Activated CD8-positive, alpha-beta T cell treated with anti-CD3 and anti-CD28 coated beads for 36 hours (primary cell): ENCODE measurements at regions of chr9 and their contacts with region 1.

Region 1: GRCh38 chr9:114653556-114654159 is 3.9 kb downstream of the TEX53 start:
- DNase-seq: peak; percentile 90
- ATAC-seq: peak; percentile 97
- H3K4me3 Mint-ChIP-seq: no peak overlapping the region
- H3K27ac Mint-ChIP-seq: no peak overlapping the region
- H3K4me1 Mint-ChIP-seq: peaks cover 25% of the 10 kb centered on the region
- H3K27me3 Mint-ChIP-seq: no peaks in the 10 kb centered on the region
- CTCF ChIP-seq: peak; percentile 91

Region 2: DNA sequence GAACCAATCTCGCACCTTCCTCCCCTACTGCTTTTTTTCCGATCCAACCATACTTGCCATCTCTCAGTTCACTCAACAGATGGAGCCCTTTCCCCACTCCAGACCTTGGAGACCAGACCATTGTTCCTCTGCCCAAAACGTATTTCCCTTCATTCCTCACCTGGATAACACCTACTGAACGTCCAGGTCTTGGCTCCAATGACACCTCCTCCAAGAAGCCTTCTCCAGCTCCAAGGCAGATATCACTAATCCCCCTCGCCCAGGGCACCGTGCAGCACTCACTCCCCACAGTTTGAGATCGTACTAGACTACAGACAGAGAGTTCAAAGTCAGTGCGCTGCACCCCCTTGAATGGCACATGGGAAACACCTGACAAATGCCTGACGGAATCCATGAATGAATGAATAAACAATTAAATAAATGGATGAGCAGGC is 218.8 kb before region 1 on chr9:
- CTCF ChIA-PET with region 1: interaction called, 20 read pairs
- POLR2A ChIA-PET with region 1: no interaction called
- intact Hi-C with region 1: no loop called
- DNase-seq: no peak
- ATAC-seq: peak; percentile 55
- H3K4me3 Mint-ChIP-seq: no peak overlapping the region
- H3K27ac Mint-ChIP-seq: no peak overlapping the region
- H3K4me1 Mint-ChIP-seq: peaks cover 4% of the 10 kb centered on the region
- H3K27me3 Mint-ChIP-seq: no peaks in the 10 kb centered on the region
- CTCF ChIP-seq: no peak

Region 3: DNA sequence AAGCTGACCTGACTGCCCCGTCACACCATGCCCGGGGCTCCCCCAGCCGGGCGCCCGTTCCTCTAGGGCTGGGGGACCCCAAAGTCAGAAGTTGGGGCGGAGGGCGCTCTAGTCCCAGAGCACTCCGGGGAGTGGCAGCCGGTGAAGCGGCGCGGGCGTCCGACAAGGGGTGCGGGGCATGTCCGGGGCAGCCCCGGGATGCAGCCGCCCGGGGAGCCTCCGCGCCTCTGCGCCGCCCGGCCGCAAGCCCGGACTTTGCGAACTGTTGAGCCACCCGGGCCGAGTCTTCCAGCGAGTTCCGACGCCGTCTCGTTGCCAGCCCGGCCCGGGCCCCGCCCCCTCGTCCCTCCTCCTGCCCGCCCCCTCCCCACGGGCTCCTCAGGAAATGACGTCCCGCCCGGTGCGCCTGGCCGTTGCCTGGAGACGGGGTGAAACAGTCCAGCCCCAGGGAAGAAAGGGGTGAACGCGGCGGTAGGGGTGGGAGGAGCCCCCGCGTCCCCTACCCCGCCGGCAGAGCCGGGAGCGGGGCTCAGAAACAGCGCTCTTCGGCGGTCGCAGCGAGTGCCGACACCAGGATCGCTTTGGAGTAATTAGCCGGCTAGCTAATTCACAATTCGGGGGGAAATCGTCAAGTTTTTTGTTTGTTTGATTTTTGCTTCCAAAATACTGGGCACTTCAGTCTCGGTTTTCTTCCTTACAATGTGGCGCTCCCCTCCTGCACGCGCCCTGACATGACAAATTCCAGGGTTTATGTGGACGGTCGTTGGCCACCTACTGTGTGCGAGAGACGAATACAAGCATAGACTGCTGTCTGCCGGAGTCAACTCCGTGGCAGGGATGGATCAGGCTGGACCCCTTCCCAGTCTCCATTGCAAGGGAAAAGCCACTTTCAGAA is 148.2 kb before region 1 on chr9 and contains the start of gene WHRN:
- CTCF ChIA-PET with region 1: interaction called, 30 read pairs
- POLR2A ChIA-PET with region 1: no interaction called
- intact Hi-C with region 1: no loop called
- DNase-seq: peak; percentile 91
- ATAC-seq: peak; percentile 81
- H3K4me3 Mint-ChIP-seq: peak within 1 kb of the TSS; percentile 77
- H3K27ac Mint-ChIP-seq: peak within 1 kb of the TSS; percentile 43
- H3K4me1 Mint-ChIP-seq: peaks cover 28% of the 10 kb centered on the region
- H3K27me3 Mint-ChIP-seq: peaks cover 24% of the 10 kb centered on the region
- CTCF ChIP-seq: no peak
- total RNA-seq, gene WHRN: 12.6 to 14.9 TPM

Region 4: GRCh38 chr9:114587385-114588202 is 66.1 kb before region 1 on chr9 and contains the start of gene ATP6V1G1:
- CTCF ChIA-PET with region 1: interaction called, 43 read pairs
- POLR2A ChIA-PET with region 1: interaction called, 10 read pairs
- intact Hi-C with region 1: loop called (anchors 10 kb)
- DNase-seq: peak; percentile 100
- ATAC-seq: peak; percentile 96
- H3K4me3 Mint-ChIP-seq: peak within 1 kb of the TSS; percentile 94
- H3K27ac Mint-ChIP-seq: peak within 1 kb of the TSS; percentile 99
- H3K4me1 Mint-ChIP-seq: peaks cover 37% of the 10 kb centered on the region
- H3K27me3 Mint-ChIP-seq: no peaks in the 10 kb centered on the region
- CTCF ChIP-seq: no peak
- total RNA-seq, gene ATP6V1G1: 34.1 to 34.7 TPM

Region 5: GRCh38 chr9:114611516-114612271 is 42.0 kb before region 1 on chr9:
- CTCF ChIA-PET with region 1: interaction called, 29 read pairs
- POLR2A ChIA-PET with region 1: no interaction called
- intact Hi-C with region 1: no loop called
- DNase-seq: peak; percentile 44
- ATAC-seq: peak; percentile 65
- H3K4me3 Mint-ChIP-seq: peak overlapping the region; percentile 85
- H3K27ac Mint-ChIP-seq: peak overlapping the region; percentile 89
- H3K4me1 Mint-ChIP-seq: peaks cover 46% of the 10 kb centered on the region
- H3K27me3 Mint-ChIP-seq: no peaks in the 10 kb centered on the region
- CTCF ChIP-seq: no peak

Region 6: DNA sequence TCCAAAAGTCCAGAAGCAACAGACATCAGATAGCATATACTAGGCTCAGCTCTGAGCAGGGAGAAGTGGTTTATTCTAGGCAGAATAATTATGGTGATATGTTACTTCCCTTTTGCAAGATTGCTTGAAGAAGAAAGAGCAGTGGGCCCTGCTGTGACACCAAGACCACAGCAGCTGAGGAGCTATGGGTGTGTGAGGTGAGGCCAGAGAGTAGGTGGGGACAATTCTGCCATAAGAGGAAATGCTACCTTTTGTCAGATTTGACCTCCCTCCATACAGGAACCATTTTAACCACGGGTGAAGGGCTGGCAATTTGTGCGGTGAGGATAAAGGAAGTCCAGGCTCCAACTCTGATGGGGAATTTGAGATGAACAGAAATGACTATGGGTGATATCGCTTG is 100.9 kb after region 1 on chr9:
- CTCF ChIA-PET with region 1: no interaction called
- POLR2A ChIA-PET with region 1: no interaction called
- intact Hi-C with region 1: no loop called
- DNase-seq: peak; percentile 43
- ATAC-seq: peak; percentile 69
- H3K4me3 Mint-ChIP-seq: no peak overlapping the region
- H3K27ac Mint-ChIP-seq: peak overlapping the region; percentile 31
- H3K4me1 Mint-ChIP-seq: peaks cover 18% of the 10 kb centered on the region
- H3K27me3 Mint-ChIP-seq: no peaks in the 10 kb centered on the region
- CTCF ChIP-seq: no peak

Region 7: GRCh38 chr9:114824110-114824509 is 170.5 kb after region 1 on chr9:
- CTCF ChIA-PET with region 1: no interaction called
- POLR2A ChIA-PET with region 1: no interaction called
- intact Hi-C with region 1: no loop called
- DNase-seq: no peak
- ATAC-seq: no peak
- H3K4me3 Mint-ChIP-seq: no peak overlapping the region
- H3K27ac Mint-ChIP-seq: no peak overlapping the region
- H3K4me1 Mint-ChIP-seq: peaks cover 36% of the 10 kb centered on the region
- H3K27me3 Mint-ChIP-seq: no peaks in the 10 kb centered on the region
- CTCF ChIP-seq: no peak

Region 8: GRCh38 chr9:114938687-114939575 is 285.3 kb after region 1 on chr9:
- CTCF ChIA-PET with region 1: no interaction called
- POLR2A ChIA-PET with region 1: no interaction called
- intact Hi-C with region 1: no loop called
- DNase-seq: no peak
- ATAC-seq: peak; percentile 51
- H3K4me3 Mint-ChIP-seq: peak overlapping the region; percentile 4
- H3K27ac Mint-ChIP-seq: peak overlapping the region; percentile 44
- H3K4me1 Mint-ChIP-seq: peaks cover 19% of the 10 kb centered on the region
- H3K27me3 Mint-ChIP-seq: no peaks in the 10 kb centered on the region
- CTCF ChIP-seq: no peak